ENCODE measurements at regions of chr14 and their contacts with region 1.

Region 1: GRCh38 chr14:53751650-53752049 is 205.0 kb downstream of the BMP4 start:
- DNase-seq: no peak
- ATAC-seq: no peak
- H3K4me3 ChIP-seq: no peak overlapping the region
- H3K27ac ChIP-seq: no peak overlapping the region
- H3K4me1 ChIP-seq: no peaks in the 10 kb centered on the region
- H3K27me3 ChIP-seq: no peaks in the 10 kb centered on the region
- CTCF ChIP-seq: no peak
- EP300 ChIP-seq: no peak
- POLR2A ChIP-seq: no peak
- RAD21 ChIP-seq: no peak

Region 2: GRCh38 chr14:53596853-53597525 is 154.7 kb before region 1 on chr14:
- CTCF ChIA-PET with region 1: no interaction called
- POLR2A ChIA-PET with region 1: no interaction called
- in situ Hi-C with region 1: no loop called
- intact Hi-C with region 1: no loop called
- DNase-seq: no peak
- ATAC-seq: no peak
- H3K4me3 ChIP-seq: no peak overlapping the region
- H3K27ac ChIP-seq: no peak overlapping the region
- H3K4me1 ChIP-seq: peaks cover 20% of the 10 kb centered on the region
- H3K27me3 ChIP-seq: no peaks in the 10 kb centered on the region
- CTCF ChIP-seq: no peak
- EP300 ChIP-seq: no peak
- POLR2A ChIP-seq: no peak
- RAD21 ChIP-seq: no peak

Region 3: GRCh38 chr14:53663709-53664108 is 87.9 kb before region 1 on chr14:
- CTCF ChIA-PET with region 1: no interaction called
- POLR2A ChIA-PET with region 1: no interaction called
- in situ Hi-C with region 1: no loop called
- intact Hi-C with region 1: no loop called
- DNase-seq: peak; percentile 76
- ATAC-seq: peak; percentile 99
- H3K4me3 ChIP-seq: no peak overlapping the region
- H3K27ac ChIP-seq: no peak overlapping the region
- H3K4me1 ChIP-seq: peaks cover 17% of the 10 kb centered on the region
- H3K27me3 ChIP-seq: no peaks in the 10 kb centered on the region
- CTCF ChIP-seq: peak; percentile 69
- EP300 ChIP-seq: no peak
- POLR2A ChIP-seq: no peak
- RAD21 ChIP-seq: peak; percentile 80

Region 4: DNA sequence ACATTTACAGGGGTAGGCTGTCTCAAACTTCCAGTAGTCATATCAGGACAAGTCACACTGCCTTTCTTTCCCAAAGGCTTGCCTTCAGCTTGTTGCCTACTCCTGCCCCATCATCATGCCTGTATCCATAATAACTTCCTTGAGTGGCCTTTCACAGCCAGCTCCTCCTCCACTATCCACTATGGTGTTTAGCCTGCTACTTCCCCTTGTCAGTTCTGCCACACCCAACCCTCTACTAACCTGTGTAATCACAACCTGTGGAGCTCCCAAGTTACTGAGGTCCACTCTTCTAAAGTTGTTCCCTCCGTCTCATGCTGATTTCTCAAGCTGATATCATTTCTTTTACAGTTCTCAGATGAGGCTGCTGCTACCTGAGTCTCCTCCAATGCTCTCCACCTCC is 45.1 kb after region 1 on chr14:
- CTCF ChIA-PET with region 1: no interaction called
- POLR2A ChIA-PET with region 1: no interaction called
- in situ Hi-C with region 1: no loop called
- intact Hi-C with region 1: loop called (anchors 1 kb)
- DNase-seq: no peak
- ATAC-seq: no peak
- H3K4me3 ChIP-seq: no peak overlapping the region
- H3K27ac ChIP-seq: no peak overlapping the region
- H3K4me1 ChIP-seq: peaks cover 29% of the 10 kb centered on the region
- H3K27me3 ChIP-seq: no peaks in the 10 kb centered on the region
- CTCF ChIP-seq: no peak
- EP300 ChIP-seq: no peak
- POLR2A ChIP-seq: no peak
- RAD21 ChIP-seq: no peak